Activated T-helper 2 cell treated with anti-CD3 and anti-CD28 coated beads, Interferon-gamma antibody, Interleukin-2, Interleukin-4, amounts not matched to agents 10 μg/mL and 5 μg/mL and 100 μg/mL, durations not matched to agents 14 hours and 24 hours and 36 hours (primary cell): ENCODE measurements at regions of chr10 and their contacts with region 1.

Region 1: DNA sequence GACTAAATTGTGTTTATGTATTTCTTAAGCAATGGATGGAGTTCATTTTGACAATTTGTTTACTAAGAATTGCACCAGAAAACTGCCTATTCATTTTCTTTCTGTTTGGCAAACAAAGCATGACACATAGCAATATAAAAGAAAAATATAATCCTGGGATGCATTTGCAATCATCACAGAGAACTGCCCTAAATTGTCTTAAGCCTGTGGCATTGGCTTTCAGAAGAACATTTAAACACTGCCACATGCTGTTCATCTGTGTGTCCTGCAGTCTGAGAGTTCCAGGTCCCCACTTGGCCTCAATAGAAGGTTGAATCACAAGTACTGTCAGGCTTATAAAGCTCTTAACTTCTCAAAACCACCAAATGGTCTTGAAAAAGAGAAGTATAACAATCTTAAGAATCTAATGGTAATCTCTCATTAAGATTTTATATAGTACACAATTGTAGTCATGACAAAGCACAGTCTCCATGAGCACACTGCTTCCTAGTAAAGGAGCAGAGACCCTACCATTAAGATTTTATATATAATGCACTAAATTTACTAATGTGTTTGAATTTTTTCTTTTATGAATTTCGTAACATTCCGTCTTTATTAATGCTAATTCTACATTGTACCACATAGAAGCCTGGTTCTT is 29.9 kb downstream of the RNLS start:
- DNase-seq: peak; percentile 16
- H3K4me3 Mint-ChIP-seq: no peak overlapping the region
- H3K27ac Mint-ChIP-seq: no peak overlapping the region
- H3K4me1 Mint-ChIP-seq: peaks cover 8% of the 10 kb centered on the region
- H3K27me3 Mint-ChIP-seq: peaks cover 6% of the 10 kb centered on the region

Region 2: GRCh38 chr10:87659571-87660483 is 893.4 kb before region 1 on chr10 and contains the start of gene PAPSS2:
- intact Hi-C with region 1: loop called (anchors 5 kb)
- DNase-seq: no peak
- H3K4me3 Mint-ChIP-seq: peak within 1 kb of the TSS; percentile 74
- H3K27ac Mint-ChIP-seq: no peak within 1 kb of the TSS
- H3K4me1 Mint-ChIP-seq: peaks cover 8% of the 10 kb centered on the region
- H3K27me3 Mint-ChIP-seq: peaks cover 54% of the 10 kb centered on the region
- total RNA-seq, gene PAPSS2: 0.21 and 0.25 TPM in 2 replicates

Region 3: DNA sequence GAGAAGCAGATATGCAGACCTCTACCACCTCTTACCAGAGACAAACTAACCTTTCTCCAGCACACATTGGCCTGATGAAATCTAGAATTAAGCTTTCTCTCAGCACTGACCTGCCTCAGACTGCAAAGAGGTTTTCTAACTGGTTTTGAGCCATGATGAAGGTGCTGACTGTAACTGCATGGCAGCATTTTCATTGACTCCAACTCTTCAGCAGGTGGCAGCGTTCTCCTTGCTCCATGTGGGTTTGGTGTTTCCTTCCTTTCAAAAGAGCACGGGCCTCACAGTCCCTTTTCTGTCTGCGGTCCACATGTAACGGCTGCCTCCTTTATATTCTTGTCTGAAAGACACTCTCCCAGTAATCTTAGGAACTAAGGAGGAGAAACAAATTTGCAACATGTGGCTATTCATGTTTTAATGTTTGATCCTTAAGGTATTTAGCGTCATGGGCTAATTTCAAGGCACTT is 702.5 kb before region 1 on chr10:
- intact Hi-C with region 1: loop called (anchors 1 kb)
- DNase-seq: peak; percentile 40
- H3K4me3 Mint-ChIP-seq: no peak overlapping the region
- H3K27ac Mint-ChIP-seq: no peak overlapping the region
- H3K4me1 Mint-ChIP-seq: peaks cover 9% of the 10 kb centered on the region
- H3K27me3 Mint-ChIP-seq: no peaks in the 10 kb centered on the region

Region 4: DNA sequence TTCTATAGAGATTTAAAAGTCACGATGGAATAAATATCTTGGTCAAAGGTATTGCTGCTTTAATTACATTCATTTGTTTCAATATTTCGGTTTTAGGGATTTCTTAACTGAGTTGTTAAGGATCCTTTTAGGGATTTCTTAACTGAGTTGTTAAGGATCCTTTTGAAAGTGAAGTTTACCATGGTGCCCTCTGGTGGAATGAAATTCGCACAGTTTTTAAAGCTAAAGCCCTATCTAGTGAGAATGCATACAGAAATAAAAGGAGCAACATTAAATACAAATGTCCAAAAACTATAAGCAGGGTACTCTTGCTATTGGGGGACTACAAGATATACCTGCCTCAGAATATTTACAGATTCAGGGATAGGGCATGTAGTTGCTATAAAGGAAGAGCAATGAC is 163.8 kb before region 1 on chr10:
- intact Hi-C with region 1: loop called (anchors 2 kb)
- DNase-seq: no peak
- H3K4me3 Mint-ChIP-seq: no peak overlapping the region
- H3K27ac Mint-ChIP-seq: no peak overlapping the region
- H3K4me1 Mint-ChIP-seq: peaks cover 29% of the 10 kb centered on the region
- H3K27me3 Mint-ChIP-seq: no peaks in the 10 kb centered on the region

Region 5: DNA sequence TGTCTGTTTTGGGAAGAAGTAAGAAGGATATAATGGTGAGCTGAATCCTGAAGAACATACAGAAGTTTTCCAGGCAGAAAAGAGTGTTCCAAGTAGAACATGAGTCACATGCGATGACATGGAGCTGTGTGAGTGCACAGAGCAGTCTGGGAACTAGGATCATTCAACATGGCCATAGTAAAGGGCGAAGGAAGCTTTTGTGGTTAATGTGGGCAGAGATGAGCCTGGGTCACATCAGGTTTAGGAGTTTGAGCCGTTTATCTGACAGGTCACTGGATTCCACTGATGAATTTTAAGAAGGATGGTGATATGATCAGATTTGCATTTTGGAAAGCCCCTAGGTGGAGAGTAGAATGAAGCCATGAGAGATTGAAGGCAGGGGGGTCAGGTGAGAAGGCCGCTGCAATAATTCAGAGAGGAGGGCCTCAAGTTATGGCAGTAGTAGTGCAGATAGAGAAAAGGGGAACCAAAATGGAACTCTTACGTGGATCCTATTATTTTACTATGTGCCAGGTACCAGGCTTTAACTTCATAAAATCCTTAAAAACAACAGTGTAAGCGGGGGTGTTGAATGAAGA is 141.4 kb before region 1 on chr10:
- intact Hi-C with region 1: loop called (anchors 5 kb)
- DNase-seq: no peak
- H3K4me3 Mint-ChIP-seq: no peak overlapping the region
- H3K27ac Mint-ChIP-seq: no peak overlapping the region
- H3K4me1 Mint-ChIP-seq: peaks cover 7% of the 10 kb centered on the region
- H3K27me3 Mint-ChIP-seq: no peaks in the 10 kb centered on the region